GM23248 (cell line): ENCODE measurements at regions of chr7 and their contacts with region 1.

Region 1: DNA sequence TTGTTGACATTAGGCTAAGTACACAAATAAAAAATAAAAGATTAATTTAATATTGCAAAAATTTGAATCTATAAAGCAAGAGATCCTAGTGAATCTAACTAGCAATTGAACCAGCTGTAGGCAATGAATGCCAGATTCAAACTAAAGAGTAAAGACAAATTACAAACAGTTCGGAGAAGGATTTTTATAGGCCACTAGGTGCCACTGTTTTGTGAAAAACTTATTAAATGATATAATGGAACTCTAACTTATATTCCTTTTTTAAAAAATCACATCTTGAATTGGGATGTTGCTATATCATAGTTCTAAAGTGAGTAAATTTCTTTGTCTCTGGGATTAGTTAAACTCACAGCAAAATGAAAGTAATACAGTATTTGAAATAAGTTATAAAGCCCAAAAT is 39.1 kb upstream of the GNAI1 start:
- DNase-seq: peak; percentile 59
- H3K4me3 ChIP-seq: no peak overlapping the region
- H3K27ac ChIP-seq: no peak overlapping the region
- H3K4me1 ChIP-seq: peaks cover 5% of the 10 kb centered on the region
- H3K27me3 ChIP-seq: no peaks in the 10 kb centered on the region

Region 2: GRCh38 chr7:79398138-79398749 is 697.3 kb before region 1 on chr7:
- in situ Hi-C with region 1: no loop called
- DNase-seq: peak; percentile 25
- H3K4me3 ChIP-seq: no peak overlapping the region; the same call in 1 of the 2 replicates
- H3K27ac ChIP-seq: peak overlapping the region; percentile 22
- H3K4me1 ChIP-seq: peaks cover 18% of the 10 kb centered on the region
- H3K27me3 ChIP-seq: no peaks in the 10 kb centered on the region

Region 3: DNA sequence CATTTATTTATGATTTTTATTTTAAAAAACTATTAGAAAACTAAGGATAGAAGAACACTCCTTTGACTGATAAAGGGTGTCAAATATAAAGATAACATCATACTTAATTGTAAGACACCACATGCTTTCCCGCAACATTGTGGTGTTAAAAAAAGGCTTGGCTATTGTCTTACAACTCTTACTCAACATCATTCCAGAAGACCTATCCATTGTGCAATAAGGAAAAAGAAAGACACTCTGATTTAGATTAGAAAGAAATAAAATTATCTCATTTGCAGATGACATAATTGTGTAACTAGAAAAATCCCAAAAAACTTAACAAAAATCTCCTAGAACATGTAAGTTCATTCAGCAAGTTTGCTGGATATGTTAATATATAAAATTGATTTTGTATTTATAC is 257.6 kb before region 1 on chr7:
- in situ Hi-C with region 1: no loop called
- DNase-seq: peak; percentile 6
- H3K4me3 ChIP-seq: no peak overlapping the region
- H3K27ac ChIP-seq: no peak overlapping the region
- H3K4me1 ChIP-seq: no peaks in the 10 kb centered on the region
- H3K27me3 ChIP-seq: no peaks in the 10 kb centered on the region

Region 4: DNA sequence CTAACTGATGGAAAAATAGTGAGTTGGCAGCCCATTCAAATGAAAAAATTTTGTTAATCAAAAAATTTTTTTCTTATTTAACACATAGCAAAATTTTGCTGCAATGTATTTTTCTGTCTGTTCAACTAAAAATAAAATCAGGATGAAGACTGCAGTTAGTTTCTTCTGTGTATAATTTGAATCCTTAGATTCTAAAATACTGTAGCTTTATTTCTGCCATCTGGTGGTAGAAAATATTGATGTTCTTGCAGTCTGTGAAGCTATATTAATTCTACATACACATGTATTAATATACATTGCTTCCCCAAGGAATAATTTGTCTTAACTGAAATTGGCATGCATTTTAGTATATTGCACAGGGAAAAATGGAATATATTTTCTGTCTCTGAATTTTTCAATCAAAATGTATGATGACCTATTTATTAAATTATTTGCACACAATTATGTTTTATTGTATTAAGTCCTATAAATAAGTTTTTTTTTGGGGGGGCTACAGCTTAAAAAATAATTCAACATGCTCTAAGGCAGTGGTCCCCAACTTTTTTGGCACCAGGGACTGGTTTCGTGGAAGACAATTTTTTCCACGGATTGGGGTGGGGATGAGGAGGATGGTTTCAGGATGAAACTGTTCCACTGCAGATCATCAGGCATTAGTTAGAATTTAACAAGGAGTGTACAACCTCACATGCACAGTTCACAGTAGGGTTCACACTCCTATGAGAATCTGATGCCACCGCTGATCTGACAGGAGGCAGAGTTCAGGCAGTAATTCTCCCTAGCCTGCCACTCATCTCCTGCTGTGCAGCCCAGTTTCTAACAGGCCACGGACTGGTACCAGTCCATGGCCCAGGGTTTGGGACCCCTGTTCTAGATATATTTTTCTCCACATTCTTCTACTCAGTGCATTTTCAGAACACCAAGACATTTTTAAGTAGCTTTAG is 297.0 kb after region 1 on chr7:
- in situ Hi-C with region 1: loop called (anchors 10 kb)
- DNase-seq: peak; percentile 58
- H3K4me3 ChIP-seq: no peak overlapping the region
- H3K27ac ChIP-seq: no peak overlapping the region
- H3K4me1 ChIP-seq: no peaks in the 10 kb centered on the region
- H3K27me3 ChIP-seq: no peaks in the 10 kb centered on the region

Region 5: GRCh38 chr7:80439894-80440821 is 344.6 kb after region 1 on chr7:
- in situ Hi-C with region 1: no loop called
- DNase-seq: peak; percentile 84
- H3K4me3 ChIP-seq: peak overlapping the region; percentile 26; the same call in 1 of the 2 replicates
- H3K27ac ChIP-seq: peak overlapping the region; percentile 73
- H3K4me1 ChIP-seq: peaks cover 21% of the 10 kb centered on the region
- H3K27me3 ChIP-seq: no peaks in the 10 kb centered on the region

Region 6: DNA sequence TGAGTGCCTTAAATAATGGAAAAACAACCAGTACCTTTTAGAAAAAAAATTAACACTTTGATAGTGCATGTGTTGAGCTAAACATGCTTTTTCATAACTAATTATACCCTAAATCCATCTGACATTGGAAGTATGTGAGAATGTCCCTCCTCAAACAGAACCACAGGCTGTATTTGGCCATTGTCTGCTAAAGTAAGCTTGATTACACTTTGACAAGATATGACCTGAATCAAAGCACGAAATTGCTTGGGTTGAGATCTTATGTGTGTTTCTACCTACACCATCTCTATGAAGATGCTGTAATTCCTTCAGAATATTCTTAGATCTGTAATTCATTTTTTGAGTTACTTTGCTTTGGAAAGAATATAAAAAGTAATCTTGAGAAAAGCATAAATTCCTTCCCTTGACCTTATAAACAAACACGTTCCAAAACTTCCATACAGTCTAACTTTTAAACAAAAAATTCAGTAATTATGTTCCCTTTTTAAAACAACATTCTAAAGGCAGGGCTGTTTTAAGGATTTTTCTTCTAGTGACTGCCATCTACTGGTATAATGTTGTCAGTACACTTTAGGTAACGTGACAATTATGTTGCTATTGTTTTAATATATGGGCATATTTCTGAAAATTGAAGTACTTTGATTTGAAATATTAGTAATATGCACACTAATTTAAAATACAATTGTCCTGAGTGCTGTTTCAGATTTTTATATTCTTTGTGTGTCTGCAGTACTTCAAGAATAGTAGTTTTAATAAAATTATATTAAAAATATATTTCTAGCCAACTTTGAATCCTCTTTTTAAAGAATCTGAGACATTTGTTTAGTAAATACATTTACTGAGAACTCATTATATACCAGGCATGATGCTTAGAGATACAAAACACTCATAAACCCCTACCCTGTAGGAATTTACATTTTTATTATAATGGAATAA is 563.8 kb after region 1 on chr7:
- in situ Hi-C with region 1: loop called (anchors 25 kb)
- DNase-seq: peak; percentile 53
- H3K4me3 ChIP-seq: no peak overlapping the region
- H3K27ac ChIP-seq: no peak overlapping the region
- H3K4me1 ChIP-seq: 0 out of 2 replicates have a peak, but pooled peaks cover 7% of the 10 kb centered on the region
- H3K27me3 ChIP-seq: no peaks in the 10 kb centered on the region

Region 7: DNA sequence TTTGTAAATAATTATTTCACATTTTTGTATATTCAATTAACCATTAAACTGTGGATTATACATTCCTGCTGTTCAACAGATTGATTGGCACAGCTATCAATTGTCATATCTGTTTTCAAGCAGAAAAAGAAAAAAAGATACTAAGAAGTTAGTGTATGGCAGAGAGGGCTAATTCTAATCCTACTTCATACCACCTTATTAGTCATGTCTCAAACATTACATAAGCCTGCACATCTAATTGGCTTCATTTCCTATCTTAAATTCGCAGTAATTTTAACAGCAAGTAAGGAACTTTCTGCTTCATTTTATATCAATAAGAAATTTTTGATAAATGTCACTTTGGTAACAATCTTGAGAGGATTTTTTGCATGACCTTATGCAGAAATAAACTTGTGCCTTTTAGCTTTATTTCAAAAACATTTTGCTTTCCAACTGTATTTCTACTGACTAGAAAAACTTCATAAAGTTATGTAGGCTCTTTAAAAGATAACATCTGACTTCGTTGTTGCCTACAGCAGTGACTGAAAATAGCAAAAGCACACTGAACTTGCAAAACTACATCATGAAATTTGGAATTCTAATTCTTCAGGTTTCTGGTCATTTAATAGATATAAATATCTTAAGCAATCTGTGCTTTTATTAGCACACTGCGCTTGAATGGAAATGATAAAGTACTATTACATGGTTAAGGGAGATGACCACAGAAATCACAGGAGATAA is 711.8 kb after region 1 on chr7:
- in situ Hi-C with region 1: no loop called
- DNase-seq: peak; percentile 56
- H3K4me3 ChIP-seq: peak overlapping the region; percentile 18; the same call in 1 of the 2 replicates
- H3K27ac ChIP-seq: peak overlapping the region; percentile 28
- H3K4me1 ChIP-seq: peaks cover 35% of the 10 kb centered on the region
- H3K27me3 ChIP-seq: no peaks in the 10 kb centered on the region